Left ventricle myocardium inferior (tissue), 1 donor: ENCODE measurements at regions of chr17 and their contacts with region 1.

Region 1: GRCh38 chr17:40399185-40399584 is 18.5 kb downstream of the TOP2A start:
- DNase-seq: no peak
- H3K4me3 ChIP-seq: no peak overlapping the region
- H3K27ac ChIP-seq: no peak overlapping the region
- H3K4me1 ChIP-seq: no peaks in the 10 kb centered on the region
- H3K27me3 ChIP-seq: no peaks in the 10 kb centered on the region
- CTCF ChIP-seq: peak; percentile 78

Region 2: DNA sequence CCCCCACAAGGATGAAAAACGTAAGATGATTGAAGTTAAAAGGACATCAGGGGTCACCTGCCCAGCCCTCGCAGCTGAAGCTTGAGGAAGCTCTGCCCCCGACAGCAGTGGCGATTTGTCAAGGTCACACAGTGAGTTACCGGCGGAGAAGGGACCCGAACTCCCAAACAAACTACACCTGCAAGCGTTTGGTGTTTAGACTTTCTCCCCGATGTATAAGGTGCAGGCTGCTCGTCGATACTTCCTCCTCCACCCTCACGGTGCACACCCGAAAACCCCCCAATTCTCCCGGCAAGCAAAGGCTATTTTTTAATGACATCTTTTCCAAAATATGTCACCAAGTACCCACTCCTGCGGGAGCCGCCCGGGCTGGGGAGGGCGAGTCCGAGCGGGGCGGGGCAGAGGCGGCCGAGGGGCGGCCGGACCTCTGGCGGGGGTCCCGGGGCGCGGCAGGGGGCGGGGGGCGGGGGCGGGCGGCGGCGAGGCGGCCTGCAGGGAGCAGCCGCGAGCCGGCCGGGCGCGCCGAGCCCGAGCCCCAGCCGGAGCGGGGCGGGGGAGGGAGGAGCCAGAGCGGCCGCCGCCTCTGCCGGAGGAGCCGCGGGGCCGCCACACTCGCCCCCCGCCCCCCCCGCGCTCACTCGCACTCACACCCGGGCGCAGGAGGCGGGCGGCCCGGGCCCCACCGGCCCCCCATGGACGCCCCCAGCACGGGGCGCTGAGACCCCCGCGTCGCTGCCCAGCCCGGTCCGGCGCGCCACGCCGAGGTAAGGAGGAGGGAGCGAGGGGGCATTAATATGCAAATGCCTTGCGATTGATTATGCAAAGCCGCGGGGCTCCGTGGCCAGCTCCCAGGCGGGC is 336.6 kb before region 1 on chr17 and contains the start of gene THRA:
- intact Hi-C with region 1: no loop called
- DNase-seq: peak; percentile 83
- H3K4me3 ChIP-seq: peak within 1 kb of the TSS; percentile 90
- H3K27ac ChIP-seq: peak within 1 kb of the TSS; percentile 100
- H3K4me1 ChIP-seq: peaks cover 69% of the 10 kb centered on the region
- H3K27me3 ChIP-seq: no peaks in the 10 kb centered on the region
- CTCF ChIP-seq: no peak
- total RNA-seq, gene THRA: 78.3 TPM

Region 3: DNA sequence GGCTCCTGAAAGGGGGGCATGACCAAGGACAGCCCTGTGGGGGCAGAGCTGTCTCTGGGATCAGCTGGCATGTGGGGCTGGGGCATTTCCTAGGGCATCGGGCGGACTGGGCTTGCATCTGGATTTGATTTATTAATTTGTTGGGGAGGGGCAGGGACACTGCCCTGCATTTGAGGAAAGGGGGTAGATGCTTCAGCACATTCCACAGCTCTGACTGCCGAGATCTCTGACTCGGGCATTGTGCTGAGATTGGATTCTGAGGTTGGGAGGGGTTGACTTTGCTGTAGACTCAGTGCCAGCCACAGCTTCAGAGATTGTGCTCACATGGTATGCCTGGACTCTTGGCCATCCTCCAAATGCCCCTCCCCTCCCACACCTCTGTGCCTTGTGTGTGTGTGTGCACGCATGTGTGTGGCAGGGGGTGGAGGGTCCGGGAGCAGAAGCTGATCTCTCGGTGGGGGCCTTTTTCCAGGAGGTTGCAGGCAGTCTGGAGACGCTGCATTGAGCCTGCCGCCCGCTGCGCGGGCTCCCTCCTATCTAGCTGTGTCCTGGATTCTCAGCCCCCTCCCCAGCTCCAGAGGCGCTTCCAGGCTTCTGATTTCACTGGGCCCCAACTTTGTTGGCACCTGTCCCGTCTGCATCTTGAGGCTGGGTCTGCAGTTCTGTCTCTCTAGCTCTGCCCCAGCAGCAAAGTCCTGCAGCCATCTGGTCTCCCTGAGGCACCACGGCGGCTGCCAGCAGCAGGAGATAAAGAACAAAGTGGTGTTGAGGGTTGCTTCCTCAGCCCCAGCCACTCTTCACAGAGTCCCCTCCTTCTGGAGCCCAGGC is 59.0 kb after region 1 on chr17:
- intact Hi-C with region 1: no loop called
- DNase-seq: no peak
- H3K4me3 ChIP-seq: peak overlapping the region; percentile 27
- H3K27ac ChIP-seq: peak overlapping the region; percentile 63
- H3K4me1 ChIP-seq: peaks cover 96% of the 10 kb centered on the region
- H3K27me3 ChIP-seq: no peaks in the 10 kb centered on the region
- CTCF ChIP-seq: no peak

Region 4: DNA sequence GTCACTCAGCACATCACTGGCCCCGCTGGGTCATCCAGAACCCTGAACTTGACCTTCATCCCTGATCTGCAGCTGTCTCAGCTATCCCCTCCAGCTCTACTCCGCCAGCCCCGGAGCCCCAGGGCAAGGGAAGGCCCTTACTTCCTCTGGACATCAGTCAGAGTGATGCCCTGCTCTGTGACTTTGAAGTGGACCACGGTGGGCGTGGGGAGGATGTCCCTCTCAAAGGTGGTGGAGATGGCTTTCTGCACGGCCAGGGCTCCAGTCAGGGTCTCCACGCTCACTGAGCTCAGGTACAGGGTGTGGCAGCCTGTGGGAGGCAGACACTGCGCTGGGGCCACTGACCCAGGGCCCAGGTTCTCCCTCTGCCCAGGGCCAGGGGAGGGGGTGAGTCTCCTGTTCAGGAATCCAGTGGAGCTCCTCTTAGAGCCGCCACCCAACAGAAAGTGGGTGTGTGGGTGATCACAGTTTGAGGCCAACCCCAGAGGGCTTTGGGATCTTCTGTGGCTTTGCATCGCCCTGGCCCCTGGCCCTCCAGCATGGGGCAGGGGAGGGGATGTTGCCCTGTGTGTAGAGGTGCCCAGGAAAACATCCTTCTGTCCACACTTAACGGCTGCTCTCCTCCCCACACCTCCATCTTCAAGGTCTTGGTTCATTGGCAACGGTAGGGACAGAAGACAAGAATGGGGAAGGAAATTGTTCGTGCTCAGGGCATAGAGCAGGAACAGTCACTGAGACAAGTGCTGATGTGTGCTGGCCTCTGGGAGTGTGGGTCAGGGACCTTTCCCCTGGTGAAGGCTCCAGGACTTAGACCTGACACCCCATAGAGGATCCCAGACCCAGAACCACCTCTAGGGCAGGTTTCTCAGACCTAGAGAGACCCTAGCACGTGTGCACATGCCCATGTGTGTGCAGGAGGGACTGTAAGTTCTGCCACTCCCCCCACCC is 80.6 kb after region 1 on chr17:
- intact Hi-C with region 1: loop called (anchors 10 kb)
- DNase-seq: no peak
- H3K4me3 ChIP-seq: no peak overlapping the region
- H3K27ac ChIP-seq: no peak overlapping the region
- H3K4me1 ChIP-seq: peaks cover 13% of the 10 kb centered on the region
- H3K27me3 ChIP-seq: peaks cover 3% of the 10 kb centered on the region
- CTCF ChIP-seq: no peak